MCF 10A (cell line): ENCODE measurements at regions of chr9 and their contacts with region 1.

Region 1: GRCh38 chr9:72038890-72039410 is 21.5 kb downstream of the C9orf57 start:
- DNase-seq: peak; percentile 85
- H3K4me3 Mint-ChIP-seq: no peak overlapping the region
- H3K27ac Mint-ChIP-seq: no peak overlapping the region
- H3K4me1 Mint-ChIP-seq: peaks cover 12% of the 10 kb centered on the region
- H3K27me3 Mint-ChIP-seq: no peaks in the 10 kb centered on the region
- CTCF ChIP-seq: peak; percentile 94

Region 2: GRCh38 chr9:71604197-71605063 is 434.5 kb before region 1 on chr9:
- CTCF ChIA-PET with region 1: no interaction called
- POLR2A ChIA-PET with region 1: no interaction called
- intact Hi-C with region 1: no loop called
- DNase-seq: peak; percentile 79
- H3K4me3 Mint-ChIP-seq: no peak overlapping the region
- H3K27ac Mint-ChIP-seq: no peak overlapping the region
- H3K4me1 Mint-ChIP-seq: no peaks in the 10 kb centered on the region
- H3K27me3 Mint-ChIP-seq: no peaks in the 10 kb centered on the region
- CTCF ChIP-seq: peak; percentile 69

Region 3: GRCh38 chr9:72022841-72023240 is 16.1 kb before region 1 on chr9:
- CTCF ChIA-PET with region 1: interaction called, 101 read pairs
- POLR2A ChIA-PET with region 1: no interaction called
- intact Hi-C with region 1: no loop called
- DNase-seq: peak; percentile 41
- H3K4me3 Mint-ChIP-seq: no peak overlapping the region
- H3K27ac Mint-ChIP-seq: no peak overlapping the region
- H3K4me1 Mint-ChIP-seq: peaks cover 16% of the 10 kb centered on the region
- H3K27me3 Mint-ChIP-seq: no peaks in the 10 kb centered on the region
- CTCF ChIP-seq: no peak

Region 4: GRCh38 chr9:72193478-72193881 is 154.5 kb after region 1 on chr9:
- CTCF ChIA-PET with region 1: interaction called, 11 read pairs
- POLR2A ChIA-PET with region 1: no interaction called
- intact Hi-C with region 1: no loop called
- DNase-seq: no peak
- H3K4me3 Mint-ChIP-seq: no peak overlapping the region
- H3K27ac Mint-ChIP-seq: no peak overlapping the region
- H3K4me1 Mint-ChIP-seq: no peaks in the 10 kb centered on the region
- H3K27me3 Mint-ChIP-seq: no peaks in the 10 kb centered on the region
- CTCF ChIP-seq: no peak

Region 5: GRCh38 chr9:72271613-72272478 is 232.9 kb after region 1 on chr9:
- CTCF ChIA-PET with region 1: interaction called, 242 read pairs
- POLR2A ChIA-PET with region 1: interaction called, 18 read pairs
- intact Hi-C with region 1: loop called (anchors 1 kb)
- DNase-seq: peak; percentile 77
- H3K4me3 Mint-ChIP-seq: no peak overlapping the region
- H3K27ac Mint-ChIP-seq: no peak overlapping the region
- H3K4me1 Mint-ChIP-seq: peaks cover 6% of the 10 kb centered on the region
- H3K27me3 Mint-ChIP-seq: no peaks in the 10 kb centered on the region
- CTCF ChIP-seq: peak; percentile 74

Region 6: DNA sequence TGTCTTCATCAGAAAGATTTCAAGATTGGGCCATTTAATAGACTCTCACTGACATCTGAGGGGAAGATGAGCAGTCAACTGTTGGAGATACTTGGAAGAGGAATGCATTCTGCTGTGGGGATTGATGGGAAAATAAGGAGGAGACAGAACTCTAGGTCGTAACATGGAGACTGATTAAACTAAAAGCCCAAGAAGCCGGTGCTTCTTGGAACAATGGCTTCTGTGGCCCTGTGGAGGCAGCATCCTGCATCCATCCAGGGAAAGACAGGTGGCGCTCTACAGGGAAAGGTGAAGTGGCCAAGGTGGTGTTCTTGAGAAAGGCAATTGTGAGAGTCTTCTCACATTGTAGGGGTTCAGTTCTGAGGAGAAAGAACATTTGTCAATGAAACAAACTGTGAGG is 294.8 kb after region 1 on chr9:
- CTCF ChIA-PET with region 1: no interaction called
- POLR2A ChIA-PET with region 1: no interaction called
- intact Hi-C with region 1: no loop called
- DNase-seq: no peak
- H3K4me3 Mint-ChIP-seq: no peak overlapping the region
- H3K27ac Mint-ChIP-seq: no peak overlapping the region
- H3K4me1 Mint-ChIP-seq: no peaks in the 10 kb centered on the region
- H3K27me3 Mint-ChIP-seq: no peaks in the 10 kb centered on the region
- CTCF ChIP-seq: no peak

Region 7: DNA sequence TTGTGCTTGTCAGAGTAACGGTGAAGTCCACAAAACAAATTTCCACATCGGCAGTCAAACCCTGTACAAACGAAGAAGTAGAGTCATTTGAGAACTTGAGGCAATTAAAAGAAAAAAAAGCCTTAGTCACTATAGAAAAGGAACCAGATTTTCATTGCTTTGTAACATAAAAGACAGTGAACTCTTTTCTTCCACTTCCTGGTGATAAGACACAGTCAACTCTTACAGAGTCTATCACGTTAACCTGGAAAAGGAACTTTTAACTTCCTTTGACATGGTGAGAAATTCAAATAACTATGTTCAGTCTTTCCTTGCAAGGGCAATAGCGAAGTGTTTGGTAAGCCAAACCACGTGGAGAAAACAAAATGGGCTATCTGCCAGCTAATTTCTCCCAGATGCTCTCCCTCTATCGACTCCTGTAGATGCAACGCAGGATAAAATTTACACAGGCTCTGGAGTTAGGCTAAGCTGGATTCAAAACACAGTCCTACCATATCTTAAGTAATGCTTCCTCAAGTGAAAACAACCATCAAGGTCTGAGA is 317.2 kb after region 1 on chr9:
- CTCF ChIA-PET with region 1: no interaction called
- POLR2A ChIA-PET with region 1: no interaction called
- intact Hi-C with region 1: no loop called
- DNase-seq: no peak
- H3K4me3 Mint-ChIP-seq: no peak overlapping the region
- H3K27ac Mint-ChIP-seq: no peak overlapping the region
- H3K4me1 Mint-ChIP-seq: peaks cover 14% of the 10 kb centered on the region
- H3K27me3 Mint-ChIP-seq: no peaks in the 10 kb centered on the region
- CTCF ChIP-seq: no peak

Region 8: GRCh38 chr9:72753266-72753893 is 714.4 kb after region 1 on chr9:
- CTCF ChIA-PET with region 1: interaction called, 5 read pairs
- POLR2A ChIA-PET with region 1: no interaction called
- intact Hi-C with region 1: loop called (anchors 2 kb)
- DNase-seq: peak; percentile 32
- H3K4me3 Mint-ChIP-seq: no peak overlapping the region
- H3K27ac Mint-ChIP-seq: no peak overlapping the region
- H3K4me1 Mint-ChIP-seq: no peaks in the 10 kb centered on the region
- H3K27me3 Mint-ChIP-seq: peaks cover 53% of the 10 kb centered on the region
- CTCF ChIP-seq: peak; percentile 32

Region 9: GRCh38 chr9:72827950-72828731 is 789.2 kb after region 1 on chr9:
- CTCF ChIA-PET with region 1: interaction called, 32 read pairs
- POLR2A ChIA-PET with region 1: no interaction called
- intact Hi-C with region 1: no loop called
- DNase-seq: peak; percentile 78
- H3K4me3 Mint-ChIP-seq: no peak overlapping the region
- H3K27ac Mint-ChIP-seq: peak overlapping the region; percentile 72
- H3K4me1 Mint-ChIP-seq: peaks cover 14% of the 10 kb centered on the region
- H3K27me3 Mint-ChIP-seq: peaks cover 3% of the 10 kb centered on the region
- CTCF ChIP-seq: no peak